Posterior cingulate gyrus (tissue), 11 donors: ENCODE measurements at regions of chr11 and their contacts with region 1.

Region 1: GRCh38 chr11:2699531-2700414 is at the start of gene KCNQ1OT1:
- DNase-seq: peak; percentile 86 to 99 (median 88)

Region 2: DNA sequence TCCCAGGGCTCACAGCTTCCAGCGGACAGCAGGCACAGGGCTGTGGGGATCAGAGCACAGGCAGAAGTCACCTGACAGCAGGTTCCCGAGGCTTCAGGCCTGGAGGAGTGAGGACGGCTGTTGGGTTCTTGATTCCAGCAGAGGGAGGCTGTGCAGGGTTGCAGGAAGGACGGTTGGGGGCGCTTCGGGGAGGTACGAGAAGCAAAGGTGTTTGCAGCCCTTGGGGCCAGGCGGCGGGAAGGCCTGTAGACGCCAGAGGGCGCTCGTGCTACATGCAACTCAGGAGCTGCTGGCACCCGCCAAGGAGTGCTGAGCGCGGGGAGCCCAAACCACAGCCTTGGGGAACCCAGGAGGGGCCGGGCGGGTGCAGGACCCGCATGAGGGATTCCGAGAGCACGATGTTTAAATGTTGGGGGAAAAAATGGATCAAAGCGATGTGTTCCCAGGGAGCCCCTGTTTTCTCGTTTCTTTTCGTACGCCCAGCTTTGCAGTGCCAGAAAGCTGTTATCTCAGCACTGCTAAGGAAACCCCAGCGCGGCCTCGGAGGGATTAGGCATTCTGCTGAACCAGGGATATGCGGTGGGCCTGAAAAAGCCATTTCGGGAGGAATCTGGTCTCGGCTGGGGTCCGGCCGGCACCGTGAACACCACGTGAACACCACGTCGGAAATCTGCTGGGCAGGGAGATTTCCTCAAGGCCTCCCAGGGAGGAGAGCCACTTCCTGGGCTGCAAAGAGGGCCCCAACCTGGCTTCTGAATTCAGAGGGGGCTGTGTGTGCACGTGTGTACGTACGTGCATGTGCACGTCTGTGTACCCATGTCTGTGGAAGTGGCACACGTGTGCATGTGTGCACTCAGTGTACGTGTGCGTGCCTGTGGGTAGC is 166.8 kb before region 1 on chr11:
- intact Hi-C with region 1: loop called (anchors 5 kb)
- DNase-seq: peak; percentile 81 to 99 (median 92)

Region 3: GRCh38 chr11:2761131-2762030 is 61.6 kb after region 1 on chr11:
- intact Hi-C with region 1: no loop called
- DNase-seq: peak in 9 of 10 donors; percentile 2 to 75 (median 9)

Region 4: DNA sequence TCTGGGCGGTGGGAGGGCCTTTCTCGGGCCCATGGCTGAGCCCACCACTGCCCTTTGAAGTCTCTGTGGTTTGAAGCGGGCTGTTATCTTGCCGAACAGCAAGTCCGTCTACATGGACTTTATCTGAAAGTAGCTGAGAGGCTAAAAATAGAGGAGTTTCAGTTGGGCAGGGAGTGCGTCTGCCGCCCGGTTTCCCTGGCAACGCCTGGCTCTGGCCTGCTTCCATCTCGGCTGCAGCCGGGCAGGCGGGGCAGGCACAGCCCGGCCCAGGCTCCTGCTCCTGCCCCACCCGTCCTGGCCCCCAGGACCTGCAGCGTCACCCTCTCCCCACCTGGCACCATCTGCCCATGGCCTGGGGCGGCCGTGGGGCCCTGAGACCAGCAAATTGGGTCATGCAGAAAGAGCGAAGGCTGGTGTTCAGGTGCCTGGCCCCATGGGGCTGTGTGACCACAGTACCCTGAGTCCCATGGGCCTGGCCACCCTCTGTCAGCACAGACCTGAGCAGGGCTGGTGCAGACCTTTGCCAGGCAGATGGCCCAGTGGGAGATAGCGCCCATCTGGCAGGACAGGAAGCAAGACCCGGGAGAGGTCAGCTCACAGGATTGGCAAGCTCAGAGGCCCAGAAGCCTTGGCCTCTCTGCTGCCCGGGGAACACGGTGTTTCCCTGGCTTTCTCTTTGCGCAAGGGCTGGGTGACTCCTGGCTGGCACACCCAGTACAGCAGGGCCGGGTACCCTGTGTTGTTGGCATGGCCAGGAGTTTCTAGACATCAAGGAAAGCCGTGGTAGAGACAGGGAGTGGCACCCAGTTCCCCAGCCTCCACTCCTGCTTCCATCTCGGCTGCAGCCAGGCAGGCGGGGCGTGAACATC is 79.1 kb after region 1 on chr11:
- intact Hi-C with region 1: loop called (anchors 5 kb)
- DNase-seq: peak; percentile 71 to 98 (median 83)

Region 5: GRCh38 chr11:2867722-2868505 is 168.1 kb after region 1 on chr11:
- intact Hi-C with region 1: loop called (anchors 5 kb)
- DNase-seq: peak in 1 of 10 donors; percentile 60

Region 6: GRCh38 chr11:2885676-2886081 is 185.9 kb after region 1 on chr11 and contains the start of gene CDKN1C:
- intact Hi-C with region 1: loop called (anchors 1 kb)
- DNase-seq: peak; percentile 73 to 98 (median 82)